CD14-positive monocyte (primary cell): ENCODE measurements at regions of chr19 and their contacts with region 1.

Region 1: DNA sequence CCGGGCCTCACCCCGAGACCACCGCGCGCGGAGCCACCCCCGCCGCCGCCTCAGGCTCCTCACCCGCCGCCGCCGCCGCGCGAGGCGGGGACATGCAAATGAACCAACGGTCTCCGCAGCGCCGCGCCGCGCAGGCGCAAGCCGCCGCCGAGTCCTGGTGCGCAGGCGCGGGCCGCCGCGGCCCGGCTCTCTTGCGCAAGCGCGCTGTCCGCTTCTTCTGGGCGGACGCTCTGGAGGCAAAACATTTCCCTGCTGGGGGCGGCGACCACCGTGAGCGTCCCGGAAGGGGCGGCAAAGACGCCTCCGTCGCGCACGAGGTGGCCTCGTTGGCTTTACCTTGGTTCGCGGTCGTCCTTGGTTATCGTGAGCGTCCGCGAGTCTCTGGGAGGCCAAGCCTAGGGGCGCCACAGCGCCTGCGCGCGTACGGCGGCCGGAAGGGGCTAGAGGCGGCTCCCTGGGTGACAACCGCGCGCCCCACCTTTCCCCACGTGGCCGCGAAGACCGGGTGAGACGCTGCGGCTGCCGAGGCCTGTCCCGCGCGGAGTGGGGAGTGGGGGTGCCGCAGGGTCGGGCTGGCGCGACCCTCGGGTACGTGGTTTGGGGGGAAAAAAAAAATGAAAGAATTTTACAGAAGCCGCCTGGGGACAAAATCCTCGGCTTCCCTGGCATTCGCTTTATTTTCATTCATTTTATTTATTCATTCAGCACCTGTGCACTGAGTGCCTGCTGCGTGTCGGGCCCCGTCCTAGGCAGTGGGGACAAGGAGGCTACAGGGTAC is at the starts of genes ARMC6 and SUGP2:
- DNase-seq: peak; percentile 81 to 84 (median 82)
- H3K4me3 ChIP-seq: peak within 1 kb of the TSS; percentile 74 to 93 (median 88)
- H3K4me3 Mint-ChIP-seq: peak within 1 kb of the TSS; percentile 80 to 93
- H3K27ac ChIP-seq: peak within 1 kb of the TSS; percentile 70 to 85
- H3K27ac Mint-ChIP-seq: peak within 1 kb of the TSS; percentile 87 to 98 (median 95)
- H3K4me1 ChIP-seq: peaks cover 24 to 35% of the 10 kb centered on the region in 2 donors
- H3K4me1 Mint-ChIP-seq: peaks cover 30% of the 10 kb centered on the region
- H3K27me3 ChIP-seq: no peaks in the 10 kb centered on the region
- H3K27me3 Mint-ChIP-seq: no peaks in the 10 kb centered on the region
- CTCF ChIP-seq: no peak
- polyA plus RNA-seq, gene ARMC6: 22.3 to 29.6 (median 26.1) TPM
- polyA plus RNA-seq, gene SUGP2: 7.6 to 143 (median 8.2) TPM

Region 2: GRCh38 chr19:18932216-18932841 is 101.3 kb before region 1 on chr19:
- intact Hi-C with region 1: loop called in 1 of 2 experiments (anchors 5 kb)
- DNase-seq: peak; percentile 82 to 90 (median 90)
- H3K4me3 ChIP-seq: peak overlapping the region; percentile 26 to 77 (median 31)
- H3K4me3 Mint-ChIP-seq: peak overlapping the region; percentile 85 to 94
- H3K27ac ChIP-seq: peak overlapping the region in 1 of 2 donors; percentile 59
- H3K27ac Mint-ChIP-seq: peak overlapping the region; percentile 81 to 96 (median 91)
- H3K4me1 ChIP-seq: peaks cover 11 to 15% of the 10 kb centered on the region in 2 donors
- H3K4me1 Mint-ChIP-seq: peaks cover 16% of the 10 kb centered on the region
- H3K27me3 ChIP-seq: no peaks in the 10 kb centered on the region
- H3K27me3 Mint-ChIP-seq: peaks cover 0 to 1% (median 0%) of the 10 kb centered on the region in 3 donors
- CTCF ChIP-seq: no peak

Region 3: DNA sequence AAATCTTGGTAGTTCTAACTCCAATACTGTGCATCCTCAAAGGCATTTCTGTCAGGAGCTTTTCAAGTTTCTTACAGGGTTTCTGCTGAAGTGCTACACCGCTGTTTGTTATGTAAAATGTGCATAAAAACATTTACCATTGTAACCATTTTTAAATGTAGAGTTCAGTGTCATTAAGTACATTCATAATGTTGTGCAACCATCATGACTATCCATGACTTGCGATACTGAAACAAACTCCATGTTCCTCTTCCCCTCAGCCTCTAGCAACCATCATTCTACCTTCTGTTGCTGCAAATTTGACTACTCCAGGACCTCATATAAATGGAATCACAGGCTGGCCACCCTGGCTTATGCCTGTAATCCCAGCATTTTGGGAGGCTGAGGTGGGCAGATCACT is 15.8 kb after region 1 on chr19:
- intact Hi-C with region 1: no loop called
- DNase-seq: no peak
- H3K4me3 ChIP-seq: no peak overlapping the region
- H3K4me3 Mint-ChIP-seq: no peak overlapping the region
- H3K27ac ChIP-seq: peak overlapping the region in 1 of 2 donors; percentile 41
- H3K27ac Mint-ChIP-seq: peak overlapping the region in 3 of 7 donors; percentile 64 to 75 (median 67)
- H3K4me1 ChIP-seq: no peaks in the 10 kb centered on the region
- H3K4me1 Mint-ChIP-seq: peaks cover 2% of the 10 kb centered on the region
- H3K27me3 ChIP-seq: no peaks in the 10 kb centered on the region
- H3K27me3 Mint-ChIP-seq: peaks cover 0 to 5% (median 0%) of the 10 kb centered on the region in 3 donors
- CTCF ChIP-seq: no peak

Region 4: DNA sequence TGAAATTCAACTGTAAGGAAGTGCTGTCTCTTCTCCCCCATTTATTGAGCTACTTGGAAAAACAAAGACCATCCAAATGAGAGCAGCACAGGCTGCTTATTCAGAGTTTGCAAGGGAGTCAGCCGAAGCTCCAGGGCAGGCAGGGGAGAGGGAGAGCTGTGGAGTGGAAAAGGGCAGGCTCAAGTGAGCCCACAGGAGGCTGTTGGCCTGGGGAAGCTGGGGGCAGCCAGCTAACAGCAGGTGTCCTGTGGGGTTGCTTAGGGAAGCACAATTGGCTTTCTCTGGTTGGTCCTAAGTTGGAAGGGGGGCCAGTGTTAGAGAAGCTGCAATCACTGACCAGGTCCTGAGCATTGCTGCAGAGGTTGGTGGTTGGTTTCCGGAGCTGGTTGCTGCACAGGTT is 54.1 kb after region 1 on chr19:
- intact Hi-C with region 1: no loop called
- DNase-seq: no peak
- H3K4me3 ChIP-seq: no peak overlapping the region
- H3K4me3 Mint-ChIP-seq: no peak overlapping the region
- H3K27ac ChIP-seq: no peak overlapping the region
- H3K27ac Mint-ChIP-seq: peak overlapping the region in 1 of 7 donors; percentile 44
- H3K4me1 ChIP-seq: no peaks in the 10 kb centered on the region
- H3K4me1 Mint-ChIP-seq: no peaks in the 10 kb centered on the region
- H3K27me3 ChIP-seq: no peaks in the 10 kb centered on the region
- H3K27me3 Mint-ChIP-seq: peaks cover 0 to 3% (median 0%) of the 10 kb centered on the region in 3 donors
- CTCF ChIP-seq: no peak